WTC11 (cell line): ENCODE measurements at regions of chr6 and their contacts with region 1.

Region 1: DNA sequence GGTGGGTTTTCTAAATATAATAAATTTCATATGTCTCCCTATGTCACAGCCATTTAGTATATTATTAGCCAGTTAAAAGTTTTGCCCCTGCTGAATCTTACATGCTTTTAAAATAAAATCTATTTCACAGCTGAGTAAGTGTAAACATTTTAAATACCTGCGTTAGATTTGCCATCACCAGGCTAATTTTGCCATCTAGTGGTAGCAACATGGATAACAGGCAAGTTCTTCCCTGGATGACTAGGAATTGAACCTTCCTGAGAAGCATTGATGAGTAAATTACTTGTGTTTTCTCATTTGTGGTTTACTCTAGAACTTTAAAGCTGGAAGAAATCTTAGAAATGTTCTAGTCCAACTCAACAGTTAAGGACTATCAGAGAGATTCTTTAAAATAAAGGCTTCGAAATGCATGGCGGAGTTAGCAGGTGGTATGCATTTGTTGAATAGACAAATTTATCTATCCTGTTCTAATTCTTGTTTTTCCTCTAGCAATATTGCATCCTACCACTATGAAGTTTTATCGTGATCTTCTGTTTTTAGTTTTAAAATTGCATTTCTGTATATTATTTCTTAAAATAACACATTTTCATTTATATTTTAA is 2.6 kb downstream of the PRSS35 start:
- DNase-seq: peak; percentile 16
- ATAC-seq: no peak
- H3K4me3 Mint-ChIP-seq: no peak overlapping the region
- H3K27ac Mint-ChIP-seq: no peak overlapping the region
- H3K4me1 Mint-ChIP-seq: peaks cover 41% of the 10 kb centered on the region
- H3K27me3 Mint-ChIP-seq: peaks cover 3% of the 10 kb centered on the region; the same call in 1 of the 2 replicates
- CTCF ChIP-seq: peak; percentile 62

Region 2: DNA sequence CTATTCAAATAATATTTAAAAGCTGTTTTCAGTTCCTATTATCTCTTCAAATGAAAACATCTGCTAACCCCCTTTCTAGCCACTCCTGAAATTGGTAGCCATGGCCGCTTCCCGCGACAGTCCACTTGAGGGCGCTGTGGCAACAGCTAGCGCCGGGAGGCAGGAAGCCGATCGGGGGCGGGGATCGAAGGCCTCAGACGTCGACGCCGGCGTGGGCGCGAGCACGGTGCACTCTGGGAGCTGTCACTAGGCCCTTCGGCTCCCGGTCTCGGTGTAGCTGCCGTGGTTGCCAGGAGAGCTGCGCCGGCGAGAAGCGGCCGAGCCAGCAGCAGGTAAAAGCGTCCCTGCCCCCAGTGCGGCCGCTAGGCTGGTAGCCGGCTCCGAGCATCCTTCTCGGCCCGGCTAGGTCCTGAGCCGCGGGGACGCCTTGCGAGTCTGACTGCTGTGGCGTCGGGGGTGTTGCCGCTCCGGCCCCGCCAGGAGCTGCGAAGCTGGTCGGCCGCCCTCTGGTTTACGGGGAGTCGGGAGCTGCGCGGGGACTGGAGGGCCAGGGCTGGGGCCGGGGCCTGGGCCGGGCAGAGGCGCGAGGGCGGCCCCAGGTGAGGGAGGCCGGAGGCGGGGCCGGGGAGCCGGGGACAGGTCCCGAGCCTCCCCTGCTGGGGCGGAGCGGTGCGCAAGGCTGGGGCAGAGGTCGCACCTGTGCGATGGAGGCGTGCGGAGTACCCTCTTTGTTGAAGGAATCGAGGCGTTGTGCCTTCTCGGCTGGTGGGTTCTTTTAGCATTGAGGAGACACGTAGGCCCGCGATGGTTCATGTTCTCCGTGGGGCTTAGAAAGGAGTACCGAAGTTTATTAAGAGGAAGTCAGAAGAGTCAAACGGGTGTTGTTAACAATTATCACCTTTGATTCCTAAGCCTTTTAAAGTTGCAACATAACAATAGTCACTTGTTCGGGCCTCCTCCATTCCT is 447.2 kb before region 1 on chr6 and contains the start of gene DOP1A:
- CTCF ChIA-PET with region 1: interaction called, 19 read pairs
- POLR2A ChIA-PET with region 1: interaction called, 3 read pairs
- DNase-seq: peak; percentile 98
- ATAC-seq: peak; percentile 79
- H3K4me3 Mint-ChIP-seq: peak within 1 kb of the TSS; percentile 88
- H3K27ac Mint-ChIP-seq: peak within 1 kb of the TSS; percentile 98
- H3K4me1 Mint-ChIP-seq: peaks cover 52% of the 10 kb centered on the region
- H3K27me3 Mint-ChIP-seq: no peaks in the 10 kb centered on the region
- CTCF ChIP-seq: peak; percentile 83
- total RNA-seq, gene DOP1A: 13.1 to 16.9 TPM (median 15.1 TPM) in 3 replicates

Region 3: GRCh38 chr6:83215131-83216047 is 299.6 kb before region 1 on chr6:
- CTCF ChIA-PET with region 1: interaction called, 20 read pairs
- POLR2A ChIA-PET with region 1: no interaction called
- DNase-seq: peak; percentile 49
- ATAC-seq: peak; percentile 97
- H3K4me3 Mint-ChIP-seq: no peak overlapping the region
- H3K27ac Mint-ChIP-seq: no peak overlapping the region
- H3K4me1 Mint-ChIP-seq: no peaks in the 10 kb centered on the region
- H3K27me3 Mint-ChIP-seq: no peaks in the 10 kb centered on the region
- CTCF ChIP-seq: peak; percentile 44

Region 4: GRCh38 chr6:83221889-83222479 is 293.0 kb before region 1 on chr6:
- CTCF ChIA-PET with region 1: interaction called, 47 read pairs
- POLR2A ChIA-PET with region 1: no interaction called
- DNase-seq: no peak
- ATAC-seq: no peak
- H3K4me3 Mint-ChIP-seq: no peak overlapping the region
- H3K27ac Mint-ChIP-seq: no peak overlapping the region
- H3K4me1 Mint-ChIP-seq: no peaks in the 10 kb centered on the region
- H3K27me3 Mint-ChIP-seq: no peaks in the 10 kb centered on the region
- CTCF ChIP-seq: peak; percentile 36

Region 5: GRCh38 chr6:83417880-83418663 is 96.9 kb before region 1 on chr6:
- CTCF ChIA-PET with region 1: interaction called, 44 read pairs
- POLR2A ChIA-PET with region 1: no interaction called
- DNase-seq: no peak
- ATAC-seq: peak; percentile 75
- H3K4me3 Mint-ChIP-seq: no peak overlapping the region
- H3K27ac Mint-ChIP-seq: no peak overlapping the region
- H3K4me1 Mint-ChIP-seq: peaks cover 3% of the 10 kb centered on the region; the same call in 1 of the 2 replicates
- H3K27me3 Mint-ChIP-seq: no peaks in the 10 kb centered on the region
- CTCF ChIP-seq: no peak; the same call in 1 of the 2 replicates

Region 6: GRCh38 chr6:83536034-83536646 is 21.2 kb after region 1 on chr6:
- CTCF ChIA-PET with region 1: interaction called, 28 read pairs
- POLR2A ChIA-PET with region 1: no interaction called
- DNase-seq: peak; percentile 74
- ATAC-seq: peak; percentile 84
- H3K4me3 Mint-ChIP-seq: no peak overlapping the region
- H3K27ac Mint-ChIP-seq: no peak overlapping the region
- H3K4me1 Mint-ChIP-seq: no peaks in the 10 kb centered on the region
- H3K27me3 Mint-ChIP-seq: peaks cover 3% of the 10 kb centered on the region
- CTCF ChIP-seq: peak; percentile 68